PC-3 (cell line): ENCODE measurements at regions of chr16 and their contacts with region 1.

Region 1: DNA sequence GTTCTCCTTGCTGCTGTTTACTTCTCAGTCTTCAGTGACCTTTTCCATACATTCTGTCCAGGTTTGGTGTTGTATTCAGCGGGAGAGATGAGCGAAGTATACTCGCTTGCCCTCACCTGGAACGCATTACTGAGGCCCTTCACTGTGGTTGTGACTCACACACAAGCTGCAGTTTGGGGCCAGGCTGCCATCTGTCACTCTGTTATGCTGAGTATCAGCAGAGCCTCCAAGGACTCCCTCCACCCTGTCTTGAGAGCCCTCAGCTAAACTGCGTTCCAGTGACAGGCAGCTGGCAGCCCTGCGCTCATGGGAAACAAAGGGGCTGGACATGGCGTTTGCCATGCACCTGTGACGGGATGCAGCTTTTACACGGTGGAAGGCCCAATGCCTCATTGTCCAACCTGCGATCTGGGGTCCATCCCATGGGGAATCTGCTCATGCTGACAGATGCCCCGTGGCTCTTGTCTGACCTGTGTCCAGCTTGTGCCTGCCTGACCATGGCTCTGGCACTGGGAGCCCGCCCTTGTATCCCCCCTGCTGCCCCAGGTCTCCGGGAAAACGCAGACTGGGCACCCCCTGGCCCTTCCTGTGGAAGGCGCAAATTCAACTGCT is 6.5 kb upstream of the ZNF778 start:
- DNase-seq: no peak
- ATAC-seq: no peak; the same call in 1 of the 2 replicates
- H3K4me3 ChIP-seq: no peak overlapping the region
- H3K27ac ChIP-seq: no peak overlapping the region
- H3K4me1 ChIP-seq: 0 out of 2 replicates have a peak, but pooled peaks cover 2% of the 10 kb centered on the region
- H3K27me3 ChIP-seq: no peaks in the 10 kb centered on the region
- CTCF ChIP-seq: no peak

Region 2: DNA sequence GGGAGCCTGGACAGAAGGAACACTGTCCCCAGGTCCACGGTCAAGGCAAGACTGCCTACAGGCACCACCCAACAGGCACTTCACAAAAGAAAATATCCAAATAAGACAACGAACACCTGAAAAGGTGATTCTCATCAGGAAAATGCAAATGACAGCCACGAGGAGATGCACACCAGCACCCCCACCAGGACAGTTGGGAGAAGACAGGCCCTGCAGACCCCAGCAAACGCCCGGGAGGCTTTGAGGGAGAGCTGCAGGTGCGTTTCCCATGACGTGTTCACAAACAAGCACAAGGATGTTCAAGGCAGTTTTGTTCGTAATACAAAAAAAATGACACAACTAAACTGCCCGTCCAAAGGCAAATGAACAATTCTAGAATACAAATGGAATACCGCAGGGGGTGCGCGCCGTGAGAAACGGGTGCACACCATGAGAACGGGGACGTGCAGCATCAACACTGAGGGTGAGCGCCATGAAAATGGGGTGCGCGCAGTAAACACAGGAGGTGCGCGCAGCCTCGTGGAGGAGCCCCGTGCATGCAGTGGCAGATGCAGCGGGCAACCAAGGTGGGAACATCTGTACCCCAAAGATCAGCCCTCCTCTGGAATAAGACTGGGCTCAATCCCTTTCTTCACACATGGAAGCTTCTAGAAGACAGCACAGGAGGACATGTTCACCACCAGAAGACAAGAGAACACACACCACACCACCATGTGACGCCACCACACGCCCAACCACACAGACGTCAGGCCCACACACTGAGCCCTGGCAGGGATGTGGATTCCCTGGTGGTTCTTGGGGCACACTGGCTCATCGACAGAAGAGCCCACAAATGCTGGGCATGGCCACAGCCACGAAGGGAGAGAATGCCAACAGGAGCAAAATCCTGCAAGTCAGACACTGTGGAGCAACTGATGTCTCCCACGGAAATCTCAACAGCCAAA is 97.7 kb after region 1 on chr16:
- CTCF ChIA-PET with region 1: no interaction called
- POLR2A ChIA-PET with region 1: no interaction called
- intact Hi-C with region 1: no loop called
- DNase-seq: no peak
- ATAC-seq: no peak
- H3K4me3 ChIP-seq: no peak overlapping the region
- H3K27ac ChIP-seq: no peak overlapping the region
- H3K4me1 ChIP-seq: no peaks in the 10 kb centered on the region
- H3K27me3 ChIP-seq: no peaks in the 10 kb centered on the region
- CTCF ChIP-seq: peak; percentile 63

Region 3: GRCh38 chr16:89651584-89651983 is 440.6 kb after region 1 on chr16:
- CTCF ChIA-PET with region 1: no interaction called
- POLR2A ChIA-PET with region 1: interaction called, 21 read pairs
- intact Hi-C with region 1: no loop called
- DNase-seq: no peak
- ATAC-seq: no peak
- H3K4me3 ChIP-seq: no peak overlapping the region
- H3K27ac ChIP-seq: no peak overlapping the region
- H3K4me1 ChIP-seq: no peaks in the 10 kb centered on the region; the same call in 1 of the 2 replicates
- H3K27me3 ChIP-seq: no peaks in the 10 kb centered on the region
- CTCF ChIP-seq: no peak